Activated B cell treated with CpG ODN at 0.5 μM for 24 hours (primary cell): ENCODE measurements at regions of chr10 and their contacts with region 1.

Region 1: GRCh38 chr10:102352066-102352715 is 43.3 kb upstream of the NFKB2 start:
- DNase-seq: peak; percentile 45
- ATAC-seq: peak; percentile 70
- H3K4me3 Mint-ChIP-seq: no peak overlapping the region
- H3K27ac Mint-ChIP-seq: no peak overlapping the region
- H3K4me1 Mint-ChIP-seq: no peaks in the 10 kb centered on the region
- H3K27me3 Mint-ChIP-seq: no peaks in the 10 kb centered on the region
- CTCF ChIP-seq: peak; percentile 81

Region 2: DNA sequence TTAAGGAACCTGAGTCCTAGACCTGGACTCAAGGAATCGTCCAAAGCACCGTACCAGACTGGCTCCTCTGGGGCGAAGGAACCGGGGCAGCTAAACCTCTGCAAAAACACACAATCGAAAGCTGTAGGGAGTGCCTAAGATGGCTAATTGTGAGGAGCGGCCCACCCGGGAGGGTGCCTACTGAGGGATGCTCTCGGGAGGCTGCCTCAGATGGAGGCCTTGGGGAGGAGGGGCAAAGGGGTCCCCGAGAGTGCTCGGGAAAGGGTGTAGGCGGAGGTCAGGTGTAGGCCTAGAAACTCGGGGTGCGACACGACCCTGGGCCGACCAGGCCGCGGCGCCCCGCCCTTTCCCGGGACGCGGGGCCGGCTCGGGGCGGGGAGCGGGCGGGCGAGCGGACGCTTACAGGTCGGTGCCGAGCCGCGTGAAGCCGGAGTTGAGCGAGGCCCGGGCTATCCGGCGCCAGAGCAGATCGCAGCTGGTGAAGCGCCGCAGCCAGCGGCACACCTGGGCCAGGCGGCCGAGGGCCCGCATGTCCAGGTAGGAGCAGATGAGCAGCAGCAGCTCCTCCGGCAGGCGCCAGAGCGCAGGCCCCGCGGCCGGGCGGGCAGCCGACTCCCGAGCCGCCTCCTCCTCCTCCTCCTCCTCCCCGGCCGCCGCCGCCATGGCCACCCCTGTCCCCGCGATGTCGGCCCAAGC is 658.1 kb before region 1 on chr10:
- CTCF ChIA-PET with region 1: no interaction called
- POLR2A ChIA-PET with region 1: no interaction called
- intact Hi-C with region 1: no loop called
- DNase-seq: peak; percentile 76
- ATAC-seq: peak; percentile 68
- H3K4me3 Mint-ChIP-seq: peak overlapping the region; percentile 97
- H3K27ac Mint-ChIP-seq: peak overlapping the region; percentile 98
- H3K4me1 Mint-ChIP-seq: peaks cover 49% of the 10 kb centered on the region
- H3K27me3 Mint-ChIP-seq: no peaks in the 10 kb centered on the region
- CTCF ChIP-seq: no peak

Region 3: GRCh38 chr10:102167861-102168260 is 184.3 kb before region 1 on chr10:
- CTCF ChIA-PET with region 1: interaction called, 37 read pairs
- POLR2A ChIA-PET with region 1: no interaction called
- intact Hi-C with region 1: loop called (anchors 1 kb)
- DNase-seq: no peak
- ATAC-seq: no peak
- H3K4me3 Mint-ChIP-seq: no peak overlapping the region
- H3K27ac Mint-ChIP-seq: no peak overlapping the region
- H3K4me1 Mint-ChIP-seq: peaks cover 5% of the 10 kb centered on the region
- H3K27me3 Mint-ChIP-seq: no peaks in the 10 kb centered on the region
- CTCF ChIP-seq: no peak

Region 4: DNA sequence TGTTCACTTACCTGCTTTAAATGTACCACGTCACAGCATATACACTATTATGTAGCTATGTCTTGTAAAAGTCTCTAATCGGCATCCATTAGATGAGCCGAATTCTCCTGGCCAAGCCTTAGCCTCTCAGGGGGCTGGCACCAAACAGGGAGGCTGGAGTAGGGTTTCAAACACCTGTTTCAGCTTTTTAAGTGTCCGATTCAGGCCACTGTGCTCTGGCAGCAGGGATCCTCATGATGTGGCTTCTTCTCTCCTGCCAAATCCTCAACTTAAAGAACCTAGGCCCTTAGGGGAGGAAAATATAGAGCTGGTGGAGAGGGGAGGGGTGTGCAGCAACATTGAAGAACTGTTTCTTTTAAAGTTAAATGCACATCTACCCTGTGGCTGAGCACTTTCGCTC is 25.2 kb before region 1 on chr10:
- CTCF ChIA-PET with region 1: interaction called, 11 read pairs
- POLR2A ChIA-PET with region 1: no interaction called
- intact Hi-C with region 1: no loop called
- DNase-seq: no peak
- ATAC-seq: no peak
- H3K4me3 Mint-ChIP-seq: no peak overlapping the region
- H3K27ac Mint-ChIP-seq: no peak overlapping the region
- H3K4me1 Mint-ChIP-seq: peaks cover 25% of the 10 kb centered on the region
- H3K27me3 Mint-ChIP-seq: no peaks in the 10 kb centered on the region
- CTCF ChIP-seq: no peak

Region 5: DNA sequence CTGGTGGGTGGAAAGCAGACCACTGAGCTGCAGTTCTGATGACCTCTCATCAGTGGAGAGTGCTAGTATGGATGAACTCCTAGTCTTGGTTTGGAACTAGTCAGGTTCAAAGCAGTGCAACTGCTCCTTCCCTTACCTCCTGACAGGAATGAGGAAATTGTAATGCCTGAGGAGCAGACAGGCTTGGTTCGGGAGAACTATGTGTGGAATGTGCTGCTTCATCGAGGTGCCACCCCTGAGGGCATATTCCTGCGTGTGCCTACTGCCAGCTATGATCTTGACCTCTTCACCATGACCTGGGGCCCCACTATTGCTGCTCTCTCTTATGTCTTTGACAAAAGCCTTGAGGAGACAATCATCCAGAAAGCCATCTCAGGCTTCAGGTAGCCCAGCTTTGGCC is 15.9 kb after region 1 on chr10:
- CTCF ChIA-PET with region 1: interaction called, 11 read pairs
- POLR2A ChIA-PET with region 1: no interaction called
- intact Hi-C with region 1: no loop called
- DNase-seq: no peak
- ATAC-seq: no peak
- H3K4me3 Mint-ChIP-seq: no peak overlapping the region
- H3K27ac Mint-ChIP-seq: no peak overlapping the region
- H3K4me1 Mint-ChIP-seq: no peaks in the 10 kb centered on the region
- H3K27me3 Mint-ChIP-seq: no peaks in the 10 kb centered on the region
- CTCF ChIP-seq: no peak